AG04449 (cell line): ENCODE measurements at regions of chr1 and their contacts with region 1.

Region 1: GRCh38 chr1:87084244-87084836 is 169.9 kb downstream of the HS2ST1 start:
- DNase-seq: no peak
- H3K4me3 ChIP-seq: no peak overlapping the region
- CTCF ChIP-seq: no peak

Region 2: DNA sequence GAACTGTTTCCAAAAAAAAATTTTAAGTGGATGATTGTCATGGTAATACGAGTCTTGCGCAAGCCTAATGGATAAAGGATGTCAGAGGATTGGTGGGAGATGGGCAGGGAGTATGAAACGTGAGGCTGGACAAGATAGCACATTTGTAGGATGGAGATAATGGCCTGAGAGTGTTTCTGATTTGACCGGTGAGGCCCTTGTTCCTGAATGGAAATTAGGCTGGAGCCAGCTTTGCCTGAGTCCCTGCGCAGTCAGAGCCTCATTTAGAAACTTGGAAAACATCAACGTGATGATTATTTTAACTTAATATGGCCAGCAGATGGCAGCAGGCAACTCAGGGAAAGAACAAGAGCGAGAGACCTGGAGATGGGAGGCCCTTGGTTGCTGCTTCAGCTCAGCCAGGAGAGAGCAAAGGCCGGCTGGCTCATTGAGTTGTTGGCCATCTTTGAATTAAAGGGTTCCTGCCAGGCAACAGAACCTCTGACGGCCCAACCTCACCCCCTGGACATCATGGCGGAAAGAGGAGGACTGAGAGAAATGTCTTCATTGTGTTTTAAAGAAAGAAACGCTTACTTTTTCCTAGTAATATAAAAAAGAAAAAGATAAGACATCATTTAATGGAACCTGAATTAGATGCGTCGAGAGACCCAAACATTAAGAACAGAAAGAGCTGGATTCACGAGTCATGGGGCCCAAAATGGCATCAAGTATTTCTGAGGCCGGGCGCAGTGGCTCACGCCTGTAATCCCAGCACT is 250.7 kb before region 1 on chr1:
- CTCF ChIA-PET with region 1: interaction called, 68 read pairs
- POLR2A ChIA-PET with region 1: no interaction called
- DNase-seq: peak; percentile 45
- H3K4me3 ChIP-seq: no peak overlapping the region
- CTCF ChIP-seq: peak; percentile 55

Region 3: DNA sequence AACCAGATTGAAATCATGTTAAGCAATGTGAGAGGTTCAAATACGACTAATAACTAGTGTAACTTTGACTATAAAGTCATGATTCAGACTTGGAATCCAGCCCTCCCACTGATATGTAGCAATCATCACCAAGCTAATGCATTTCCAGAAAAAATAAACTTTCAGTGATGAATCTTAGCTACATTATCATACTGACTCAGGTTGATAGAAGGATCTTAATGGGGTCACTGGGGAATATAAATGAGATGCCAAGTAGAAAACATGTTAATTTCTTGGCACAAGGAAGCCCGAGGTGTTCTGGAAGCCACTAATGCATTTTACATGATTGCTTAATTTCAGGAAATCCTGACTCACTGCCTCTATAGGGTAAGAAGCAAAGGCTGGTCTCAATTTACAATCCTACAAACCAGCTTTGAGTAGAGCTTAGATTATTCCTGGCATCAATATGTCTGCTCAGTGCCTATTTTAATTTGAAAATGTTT is 238.1 kb before region 1 on chr1:
- CTCF ChIA-PET with region 1: interaction called, 10 read pairs
- POLR2A ChIA-PET with region 1: no interaction called
- DNase-seq: peak; percentile 80
- H3K4me3 ChIP-seq: no peak overlapping the region
- CTCF ChIP-seq: no peak

Region 4: GRCh38 chr1:86933562-86934377 is 150.6 kb before region 1 on chr1:
- CTCF ChIA-PET with region 1: no interaction called
- POLR2A ChIA-PET with region 1: no interaction called
- DNase-seq: no peak
- H3K4me3 ChIP-seq: no peak overlapping the region
- CTCF ChIP-seq: no peak

Region 5: GRCh38 chr1:87058343-87058649 is 26.0 kb before region 1 on chr1:
- CTCF ChIA-PET with region 1: interaction called, 16 read pairs
- POLR2A ChIA-PET with region 1: no interaction called
- DNase-seq: no peak
- H3K4me3 ChIP-seq: no peak overlapping the region
- CTCF ChIP-seq: no peak

Region 6: DNA sequence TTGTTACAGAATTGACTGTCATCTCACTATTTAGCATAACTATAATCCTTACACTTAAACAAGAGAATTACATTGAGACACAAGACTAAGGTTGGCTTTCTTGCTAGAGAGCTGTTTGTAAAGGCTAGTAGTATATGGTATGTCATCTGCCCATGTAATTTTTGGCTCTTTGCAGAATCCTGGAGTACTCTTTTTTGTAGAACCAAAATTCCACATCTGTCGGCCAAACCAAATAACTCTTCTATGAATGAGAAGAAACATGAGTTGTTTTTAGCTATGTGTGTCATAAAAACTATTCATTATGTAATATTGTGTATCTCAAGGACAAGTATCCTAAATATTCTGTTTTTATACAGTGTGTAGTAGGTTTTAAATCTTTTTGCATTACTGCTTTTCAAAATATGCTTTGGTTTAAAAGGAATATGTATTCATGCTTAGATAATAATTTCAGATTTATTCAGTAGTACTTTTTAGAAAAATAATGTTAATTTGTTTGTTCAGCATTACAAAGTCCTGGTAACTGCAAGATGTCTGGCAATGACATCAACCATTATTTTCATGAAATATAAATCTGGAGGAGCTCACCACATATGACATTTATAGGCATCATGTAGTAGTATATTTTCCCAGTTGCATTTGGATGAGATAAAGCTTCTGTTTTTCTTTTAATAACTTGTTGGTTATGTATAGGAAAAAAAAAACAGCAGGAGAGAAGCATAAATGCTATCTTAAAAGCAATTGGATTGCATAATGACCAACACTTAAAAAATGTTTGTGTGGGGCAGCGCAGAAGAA is 10.1 kb before region 1 on chr1:
- CTCF ChIA-PET with region 1: interaction called, 50 read pairs
- POLR2A ChIA-PET with region 1: no interaction called
- DNase-seq: no peak
- H3K4me3 ChIP-seq: no peak overlapping the region
- CTCF ChIP-seq: no peak